ENCODE measurements at regions of chr11 and their contacts with region 1.

Region 1: GRCh38 chr11:118895142-118896039 is 11.7 kb downstream of the CXCR5 start:
- DNase-seq: peak; percentile 75
- CTCF ChIP-seq: no peak

Region 2: DNA sequence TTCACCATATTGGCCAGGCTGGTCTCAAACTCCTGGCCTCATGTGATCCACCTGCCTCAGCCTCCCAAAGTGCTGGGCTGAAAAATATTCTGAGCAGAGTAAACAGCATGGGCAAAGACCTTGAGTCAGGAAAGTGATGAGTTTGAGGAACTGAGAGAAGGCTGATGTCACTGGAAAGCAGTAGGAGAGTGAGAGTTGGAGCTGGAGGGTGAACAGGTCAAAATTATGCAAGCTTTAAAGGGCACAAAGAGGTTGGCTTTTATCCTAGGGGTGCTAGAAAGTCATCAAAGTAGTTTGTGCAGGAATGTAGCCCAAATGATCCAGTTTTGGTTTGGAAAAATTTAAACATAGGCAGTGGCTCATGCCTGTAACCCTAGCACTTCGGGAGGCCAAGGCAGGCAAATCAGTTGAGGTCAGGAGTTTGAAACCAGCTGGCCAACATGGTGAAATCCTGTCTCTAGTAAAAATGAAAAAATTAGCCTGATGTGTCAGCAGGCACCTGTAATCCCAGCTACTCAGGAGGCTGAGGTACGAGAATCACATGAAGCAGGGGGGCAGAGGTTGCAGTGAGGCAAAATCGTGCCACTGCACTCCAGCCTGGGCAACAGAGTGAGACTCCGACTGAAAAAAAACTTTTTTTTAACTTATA is 56.4 kb before region 1 on chr11:
- CTCF ChIA-PET with region 1: no interaction called
- POLR2A ChIA-PET with region 1: interaction called, 12 read pairs
- DNase-seq: peak; percentile 64
- CTCF ChIP-seq: no peak

Region 3: GRCh38 chr11:118907051-118908042 is 12.0 kb after region 1 on chr11:
- CTCF ChIA-PET with region 1: interaction called, 26 read pairs
- POLR2A ChIA-PET with region 1: no interaction called
- DNase-seq: peak; percentile 88
- CTCF ChIP-seq: peak; percentile 97

Measured in GM10248 (cell line).